GM12878 (cell line): ENCODE measurements at regions of chr2 and their contacts with region 1.

Region 1: GRCh38 chr2:68403199-68403644 is 38.1 kb downstream of the PLEK start:
- DNase-seq: no peak
- ATAC-seq: peak; percentile 89
- H3K4me3 ChIP-seq: no peak overlapping the region
- H3K27ac ChIP-seq: peak overlapping the region; percentile 52
- H3K4me1 ChIP-seq: peaks cover 25% of the 10 kb centered on the region
- H3K27me3 ChIP-seq: no peaks in the 10 kb centered on the region
- CTCF ChIP-seq: no peak
- EP300 ChIP-seq: no peak
- POLR2A ChIP-seq: no peak
- RAD21 ChIP-seq: no peak

Region 2: GRCh38 chr2:68418855-68419254 is 15.6 kb after region 1 on chr2:
- CTCF ChIA-PET with region 1: interaction called, 4 read pairs
- POLR2A ChIA-PET with region 1: interaction called, 4 read pairs
- RAD21 ChIA-PET with region 1: interaction called, 31 read pairs
- SMC1A ChIA-PET with region 1: interaction called, 30 read pairs
- in situ Hi-C with region 1: no loop called
- intact Hi-C with region 1: no loop called
- DNase-seq: no peak
- ATAC-seq: peak; percentile 76
- H3K4me3 ChIP-seq: no peak overlapping the region
- H3K27ac ChIP-seq: no peak overlapping the region
- H3K4me1 ChIP-seq: peaks cover 36% of the 10 kb centered on the region
- H3K27me3 ChIP-seq: no peaks in the 10 kb centered on the region; a peak in 1 of 4 replicates
- CTCF ChIP-seq: peak in 2 of 3 experiments; percentile 15 to 23; a peak in 1 of 6 replicates
- EP300 ChIP-seq: no peak
- POLR2A ChIP-seq: no peak
- RAD21 ChIP-seq: no peak

Region 3: GRCh38 chr2:68487773-68488355 is 84.6 kb after region 1 on chr2:
- CTCF ChIA-PET with region 1: no interaction called
- POLR2A ChIA-PET with region 1: no interaction called
- RAD21 ChIA-PET with region 1: no interaction called
- SMC1A ChIA-PET with region 1: no interaction called
- in situ Hi-C with region 1: no loop called
- intact Hi-C with region 1: no loop called
- DNase-seq: no peak
- ATAC-seq: peak; percentile 74
- H3K4me3 ChIP-seq: no peak overlapping the region
- H3K27ac ChIP-seq: no peak overlapping the region
- H3K4me1 ChIP-seq: peaks cover 5% of the 10 kb centered on the region; the same call in 1 of the 2 replicates
- H3K27me3 ChIP-seq: no peaks in the 10 kb centered on the region
- CTCF ChIP-seq: peak in 2 of 3 experiments; percentile 26 to 49; a peak in 3 of 6 replicates
- EP300 ChIP-seq: no peak
- POLR2A ChIP-seq: no peak
- RAD21 ChIP-seq: peak; percentile 37